Naive thymus-derived CD4-positive, alpha-beta T cell (primary cell): ENCODE measurements at regions of chr15 and their contacts with region 1.

Region 1: GRCh38 chr15:70259028-70259424 is 161.3 kb upstream of the TLE3 start:
- DNase-seq: peak in 8 of 9 donors; percentile 35 to 61 (median 54)
- ATAC-seq: peak; percentile 58
- H3K4me3 ChIP-seq: peak overlapping the region; percentile 40
- H3K4me3 Mint-ChIP-seq: peak overlapping the region; percentile 79 to 96 (median 84)
- H3K27ac ChIP-seq: peak overlapping the region; percentile 56
- H3K27ac Mint-ChIP-seq: peak overlapping the region; percentile 76 to 95 (median 92)
- H3K4me1 ChIP-seq: peaks cover 29 to 40% of the 10 kb centered on the region in 2 donors
- H3K4me1 Mint-ChIP-seq: peaks cover 46 to 69% (median 51%) of the 10 kb centered on the region in 7 donors
- H3K27me3 ChIP-seq: no peaks in the 10 kb centered on the region
- H3K27me3 Mint-ChIP-seq: peaks cover 0 to 34% (median 0%) of the 10 kb centered on the region in 5 donors

Region 2: DNA sequence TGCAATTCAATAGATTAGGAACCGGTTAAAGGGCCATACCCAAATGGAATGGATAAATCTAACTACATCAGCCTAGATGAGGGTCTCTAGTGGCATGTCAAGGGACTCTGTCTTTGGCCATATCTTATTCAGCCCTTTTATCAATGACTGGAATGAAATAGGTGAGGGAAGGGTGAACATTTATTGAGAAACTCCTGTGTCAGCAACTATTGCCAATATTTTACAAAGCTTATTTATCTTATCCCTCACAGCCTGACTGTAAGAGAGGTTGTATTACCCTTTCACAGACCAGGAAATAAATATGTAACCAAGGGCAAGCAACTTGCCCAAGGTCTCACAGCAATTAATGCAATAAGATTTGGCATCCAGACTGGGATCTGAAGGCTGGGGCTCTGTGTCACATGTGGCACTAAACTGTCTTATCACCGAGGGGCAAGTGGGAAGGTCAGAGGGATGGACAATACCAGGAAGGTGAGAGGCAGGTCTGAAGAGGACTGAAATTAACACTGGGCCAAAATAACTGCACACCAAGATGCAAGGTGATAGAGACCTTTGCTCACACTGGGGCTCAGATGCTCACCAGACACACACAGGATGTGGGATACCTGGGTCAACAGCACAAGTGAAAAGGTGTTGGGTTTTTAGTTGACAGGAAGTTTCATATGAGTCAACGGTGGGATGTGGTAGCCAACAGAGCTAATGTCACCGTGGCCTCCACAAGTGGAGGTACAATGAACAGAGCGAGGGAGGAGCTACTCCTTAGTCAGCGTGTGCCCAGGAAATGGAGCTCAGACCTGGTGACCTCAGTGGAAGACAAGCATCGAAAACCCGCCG is 545.1 kb before region 1 on chr15:
- CTCF ChIA-PET with region 1: no interaction called
- POLR2A ChIA-PET with region 1: no interaction called
- intact Hi-C with region 1: loop called in 1 of 2 experiments (anchors 10 kb)
- DNase-seq: peak in 8 of 9 donors; percentile 60 to 80 (median 70)
- ATAC-seq: peak; percentile 88
- H3K4me3 ChIP-seq: no peak overlapping the region
- H3K4me3 Mint-ChIP-seq: peak overlapping the region; percentile 52 to 80 (median 72)
- H3K27ac ChIP-seq: no peak overlapping the region
- H3K27ac Mint-ChIP-seq: peak overlapping the region; percentile 71 to 90 (median 78)
- H3K4me1 ChIP-seq: peaks cover 32 to 50% of the 10 kb centered on the region in 2 donors
- H3K4me1 Mint-ChIP-seq: peaks cover 31 to 63% (median 54%) of the 10 kb centered on the region in 7 donors
- H3K27me3 ChIP-seq: no peaks in the 10 kb centered on the region
- H3K27me3 Mint-ChIP-seq: peaks cover 0 to 22% (median 0%) of the 10 kb centered on the region in 5 donors

Region 3: GRCh38 chr15:70245932-70246331 is 13.1 kb before region 1 on chr15:
- CTCF ChIA-PET with region 1: no interaction called
- POLR2A ChIA-PET with region 1: interaction called, 4 read pairs
- intact Hi-C with region 1: loop called in 1 of 2 experiments (anchors 2 kb)
- DNase-seq: no peak
- ATAC-seq: peak; percentile 89
- H3K4me3 ChIP-seq: no peak overlapping the region
- H3K4me3 Mint-ChIP-seq: no peak overlapping the region
- H3K27ac ChIP-seq: no peak overlapping the region
- H3K27ac Mint-ChIP-seq: no peak overlapping the region
- H3K4me1 ChIP-seq: peaks cover 0 to 16% of the 10 kb centered on the region in 2 donors
- H3K4me1 Mint-ChIP-seq: peaks cover 31 to 64% (median 47%) of the 10 kb centered on the region in 7 donors
- H3K27me3 ChIP-seq: no peaks in the 10 kb centered on the region
- H3K27me3 Mint-ChIP-seq: peaks cover 0 to 8% (median 0%) of the 10 kb centered on the region in 5 donors

Region 4: GRCh38 chr15:70299931-70300869 is 41.2 kb after region 1 on chr15:
- CTCF ChIA-PET with region 1: no interaction called
- POLR2A ChIA-PET with region 1: no interaction called
- intact Hi-C with region 1: loop called in 1 of 2 experiments (anchors 2 kb)
- DNase-seq: peak in 7 of 9 donors; percentile 2 to 56 (median 20)
- ATAC-seq: peak; percentile 96
- H3K4me3 ChIP-seq: peak overlapping the region; percentile 31
- H3K4me3 Mint-ChIP-seq: peak overlapping the region in 8 of 10 donors; percentile 20 to 64 (median 40)
- H3K27ac ChIP-seq: no peak overlapping the region
- H3K27ac Mint-ChIP-seq: peak overlapping the region in 5 of 9 donors; percentile 6 to 57 (median 20)
- H3K4me1 ChIP-seq: peaks cover 20 to 28% of the 10 kb centered on the region in 2 donors
- H3K4me1 Mint-ChIP-seq: peaks cover 5 to 13% (median 10%) of the 10 kb centered on the region in 7 donors
- H3K27me3 ChIP-seq: no peaks in the 10 kb centered on the region
- H3K27me3 Mint-ChIP-seq: peaks cover 0 to 25% (median 0%) of the 10 kb centered on the region in 5 donors

Region 5: DNA sequence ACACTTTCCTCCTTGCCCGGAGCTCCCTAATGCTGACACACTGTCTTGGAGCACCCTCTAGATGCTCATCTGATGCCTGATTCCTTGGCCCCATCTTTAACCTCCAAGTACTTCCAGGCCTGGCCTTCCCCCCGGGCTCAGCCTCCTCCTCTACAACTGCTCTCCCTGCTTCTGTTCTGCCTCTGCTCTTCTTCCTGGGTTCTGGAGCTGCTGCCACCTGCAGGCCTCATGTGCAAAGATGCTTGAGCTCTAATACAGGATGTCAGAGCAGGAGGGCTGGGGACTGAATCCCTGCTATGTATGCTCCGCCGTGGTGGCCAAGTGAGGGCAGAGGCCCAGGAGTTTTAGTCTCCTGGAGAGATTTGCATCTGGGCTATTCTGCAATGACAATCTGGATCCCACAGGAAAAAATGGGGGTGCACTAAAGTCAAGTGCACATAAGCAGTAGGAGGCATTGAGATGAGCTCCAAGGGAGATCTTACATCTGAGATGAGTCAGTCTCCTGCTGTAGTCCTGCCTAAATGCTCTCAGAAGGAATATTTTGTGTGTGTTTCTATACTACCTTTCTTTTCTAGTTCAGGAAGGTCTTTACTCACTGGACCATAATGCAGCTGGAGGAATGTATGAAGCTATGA is 208.0 kb after region 1 on chr15:
- CTCF ChIA-PET with region 1: no interaction called
- POLR2A ChIA-PET with region 1: no interaction called
- intact Hi-C with region 1: loop called in 1 of 2 experiments (anchors 10 kb)
- DNase-seq: peak in 6 of 9 donors; percentile 20 to 61 (median 54)
- ATAC-seq: peak; percentile 57
- H3K4me3 ChIP-seq: no peak overlapping the region
- H3K4me3 Mint-ChIP-seq: no peak overlapping the region
- H3K27ac ChIP-seq: no peak overlapping the region
- H3K27ac Mint-ChIP-seq: peak overlapping the region in 1 of 9 donors; percentile 3
- H3K4me1 ChIP-seq: no peaks in the 10 kb centered on the region
- H3K4me1 Mint-ChIP-seq: peaks cover 0 to 13% (median 6%) of the 10 kb centered on the region in 7 donors
- H3K27me3 ChIP-seq: no peaks in the 10 kb centered on the region
- H3K27me3 Mint-ChIP-seq: peaks cover 0 to 81% (median 4%) of the 10 kb centered on the region in 5 donors

Region 6: DNA sequence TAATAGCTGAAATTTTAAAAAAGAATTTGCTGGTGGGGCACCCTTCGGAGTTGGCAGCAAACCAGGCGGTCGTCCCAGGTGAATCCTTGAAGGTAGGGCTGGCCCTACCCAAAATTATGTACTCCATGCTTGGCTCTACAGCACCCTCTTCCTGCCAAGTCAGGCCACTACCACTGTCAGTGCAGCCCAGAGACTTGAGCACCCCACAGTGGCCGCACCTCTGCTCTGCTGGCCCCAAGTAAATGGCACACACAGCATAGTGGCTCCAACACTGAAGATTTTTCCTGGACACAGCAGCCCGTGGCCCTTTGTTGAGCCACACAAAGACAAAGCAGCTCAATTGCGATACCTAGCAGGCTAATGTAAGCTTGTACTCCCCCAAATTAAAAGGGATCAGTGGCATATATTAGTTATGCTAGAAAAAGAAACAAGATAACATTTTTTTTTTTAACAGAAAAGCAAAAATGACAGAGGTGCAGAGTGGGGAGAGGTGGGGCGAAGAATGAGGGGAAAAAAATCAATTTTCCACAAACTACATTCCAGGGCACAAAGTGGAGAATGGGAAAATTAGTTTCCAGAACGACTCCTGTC is 253.8 kb after region 1 on chr15:
- CTCF ChIA-PET with region 1: interaction called, 3 read pairs
- POLR2A ChIA-PET with region 1: no interaction called
- intact Hi-C with region 1: loop called in 1 of 2 experiments (anchors 2 kb)
- DNase-seq: peak; percentile 30 to 72 (median 45)
- ATAC-seq: peak; percentile 79
- H3K4me3 ChIP-seq: no peak overlapping the region
- H3K4me3 Mint-ChIP-seq: no peak overlapping the region
- H3K27ac ChIP-seq: no peak overlapping the region
- H3K27ac Mint-ChIP-seq: peak overlapping the region in 1 of 9 donors; percentile 32
- H3K4me1 ChIP-seq: peaks cover 0 to 10% of the 10 kb centered on the region in 2 donors
- H3K4me1 Mint-ChIP-seq: peaks cover 10 to 38% (median 17%) of the 10 kb centered on the region in 7 donors
- H3K27me3 ChIP-seq: no peaks in the 10 kb centered on the region
- H3K27me3 Mint-ChIP-seq: peaks cover 0 to 28% (median 0%) of the 10 kb centered on the region in 5 donors